HCT116 (cell line): ENCODE measurements at regions of chr11 and their contacts with region 1.

Region 1: GRCh38 chr11:4636962-4637661 is at the start of gene OR51D1:
- DNase-seq: peak; percentile 43
- ATAC-seq: peak; percentile 98
- H3K4me3 ChIP-seq: no peak within 1 kb of the TSS
- H3K27ac ChIP-seq: no peak within 1 kb of the TSS
- H3K4me1 ChIP-seq: no peaks in the 10 kb centered on the region
- H3K27me3 ChIP-seq: peaks cover 43% of the 10 kb centered on the region
- CTCF ChIP-seq: peak; percentile 44 to 88 (median 81); a peak in 5 of 6 replicates
- POLR2A ChIP-seq: no peak
- RAD21 ChIP-seq: peak; percentile 73
- total RNA-seq, gene OR51D1: not detected

Region 2: GRCh38 chr11:4181782-4182721 is 455.1 kb before region 1 on chr11:
- CTCF ChIA-PET with region 1: interaction called, 11 read pairs
- POLR2A ChIA-PET with region 1: no interaction called
- RAD21 ChIA-PET with region 1: no interaction called
- intact Hi-C with region 1: no loop called
- DNase-seq: peak; percentile 57
- ATAC-seq: peak; percentile 96
- H3K4me3 ChIP-seq: no peak overlapping the region
- H3K27ac ChIP-seq: no peak overlapping the region
- H3K4me1 ChIP-seq: peaks cover 0 to 1% of the 10 kb centered on the region in 2 experiments; a peak in 1 of 4 replicates
- H3K27me3 ChIP-seq: no peaks in the 10 kb centered on the region
- CTCF ChIP-seq: peak; percentile 75 to 95 (median 88)
- POLR2A ChIP-seq: no peak
- RAD21 ChIP-seq: peak; percentile 91

Region 3: DNA sequence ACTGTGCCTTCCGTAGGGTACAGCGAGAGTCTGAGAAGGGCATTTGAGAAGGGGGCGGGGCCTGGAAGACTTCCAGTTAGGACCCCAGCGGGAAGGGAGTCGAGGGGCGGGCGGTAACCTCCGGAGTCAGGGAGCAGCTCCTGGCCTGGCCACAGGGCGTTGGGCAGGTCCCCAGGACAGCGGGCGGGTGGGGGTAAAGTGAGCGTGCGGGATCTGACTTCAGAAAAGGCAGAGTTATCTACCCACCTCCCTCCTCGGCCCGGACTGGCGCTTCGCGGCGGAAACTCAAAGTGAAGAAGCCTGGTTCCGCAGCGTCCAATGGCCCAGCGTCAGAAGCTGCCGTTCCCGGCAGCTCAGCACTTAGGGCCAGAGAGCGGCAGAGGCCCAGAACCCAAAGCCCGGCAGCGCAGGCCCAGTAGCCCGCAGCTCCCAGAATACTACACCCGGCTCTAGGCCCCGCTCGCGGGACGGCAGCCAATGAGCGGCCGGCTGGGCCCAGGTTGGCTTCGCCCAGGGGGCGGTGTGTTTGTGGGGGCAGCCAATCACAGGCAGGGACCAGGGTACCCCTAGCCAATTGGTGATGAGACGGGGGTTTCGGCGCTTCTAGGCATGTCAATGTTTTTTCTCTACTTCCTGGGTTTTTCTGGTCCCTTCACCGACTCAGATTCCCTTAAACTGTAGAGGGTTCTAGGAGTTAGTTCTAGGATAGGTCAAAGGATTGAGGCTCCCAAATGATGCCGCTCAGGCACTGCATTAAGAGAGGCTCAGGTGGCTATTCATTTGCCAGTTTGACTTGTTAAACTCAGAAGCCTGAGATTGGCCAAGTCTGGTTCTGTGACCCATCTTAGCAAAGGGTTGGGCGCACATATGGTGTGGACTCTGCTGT is 29.1 kb before region 1 on chr11 and contains the start of gene TRIM68:
- CTCF ChIA-PET with region 1: interaction called, 13 read pairs
- POLR2A ChIA-PET with region 1: no interaction called
- RAD21 ChIA-PET with region 1: no interaction called
- intact Hi-C with region 1: no loop called
- DNase-seq: peak; percentile 89
- ATAC-seq: peak; percentile 99
- H3K4me3 ChIP-seq: peak within 1 kb of the TSS; percentile 67 to 80
- H3K27ac ChIP-seq: peak within 1 kb of the TSS; percentile 56
- H3K4me1 ChIP-seq: peaks cover 0 to 15% of the 10 kb centered on the region in 2 experiments; a peak in 2 of 4 replicates
- H3K27me3 ChIP-seq: no peaks in the 10 kb centered on the region
- CTCF ChIP-seq: no peak
- POLR2A ChIP-seq: peak; percentile 71
- RAD21 ChIP-seq: no peak
- total RNA-seq, gene TRIM68: 8.3 TPM

Region 4: GRCh38 chr11:4662876-4663275 is 25.8 kb after region 1 on chr11:
- CTCF ChIA-PET with region 1: interaction called, 11 read pairs
- POLR2A ChIA-PET with region 1: no interaction called
- RAD21 ChIA-PET with region 1: no interaction called
- intact Hi-C with region 1: no loop called
- DNase-seq: no peak
- ATAC-seq: no peak
- H3K4me3 ChIP-seq: no peak overlapping the region
- H3K27ac ChIP-seq: no peak overlapping the region
- H3K4me1 ChIP-seq: no peaks in the 10 kb centered on the region
- H3K27me3 ChIP-seq: peaks cover 74% of the 10 kb centered on the region
- CTCF ChIP-seq: no peak
- POLR2A ChIP-seq: no peak
- RAD21 ChIP-seq: no peak

Region 5: DNA sequence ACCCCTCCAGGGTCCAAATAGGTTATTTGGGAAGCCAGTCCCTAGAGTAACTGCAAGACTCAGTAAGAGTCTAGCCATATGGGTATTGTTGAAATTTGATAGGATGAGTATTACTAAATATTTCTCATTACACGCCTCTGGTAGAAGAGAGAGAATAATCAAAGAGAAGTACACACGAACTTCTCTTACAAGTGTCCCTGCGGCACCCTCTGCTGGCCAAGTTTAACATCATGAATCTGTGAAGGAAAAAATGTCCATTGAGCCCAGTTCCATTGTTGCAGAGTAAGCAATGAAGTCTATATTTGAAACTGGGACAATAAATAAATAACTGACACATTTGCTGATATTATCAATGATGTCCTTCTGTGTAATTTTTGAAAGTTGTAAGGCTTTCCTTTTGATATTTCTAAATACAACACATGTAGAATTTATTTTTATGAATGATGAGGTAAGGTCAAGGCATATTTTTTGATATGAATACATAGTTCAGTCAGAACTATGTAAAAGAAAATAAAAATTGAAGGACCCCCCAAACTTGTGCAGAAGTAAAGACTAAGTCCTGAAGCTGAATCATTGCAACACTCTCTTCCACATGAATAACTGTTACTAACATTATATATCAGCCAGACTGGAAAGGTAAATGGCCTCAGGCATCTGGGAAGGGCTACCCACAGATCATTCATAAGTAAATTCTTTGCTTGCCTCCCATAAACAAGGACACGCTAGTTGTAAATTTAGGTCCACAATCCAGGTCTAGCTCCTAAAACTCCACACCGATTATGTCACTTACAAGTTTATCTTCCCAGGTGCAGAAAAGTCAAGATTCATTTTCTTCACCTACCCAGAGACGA is 367.5 kb after region 1 on chr11:
- CTCF ChIA-PET with region 1: interaction called, 3 read pairs
- POLR2A ChIA-PET with region 1: no interaction called
- RAD21 ChIA-PET with region 1: interaction called in 1 of 2 experiments, 4 read pairs
- intact Hi-C with region 1: loop called (anchors 1 kb)
- DNase-seq: peak; percentile 36
- ATAC-seq: peak; percentile 71
- H3K4me3 ChIP-seq: no peak overlapping the region
- H3K27ac ChIP-seq: no peak overlapping the region
- H3K4me1 ChIP-seq: no peaks in the 10 kb centered on the region
- H3K27me3 ChIP-seq: peaks cover 33% of the 10 kb centered on the region
- CTCF ChIP-seq: peak; percentile 56 to 73 (median 64); a peak in 5 of 6 replicates
- POLR2A ChIP-seq: no peak
- RAD21 ChIP-seq: peak; percentile 74